Heart right ventricle (tissue), 16 donors: ENCODE measurements at regions of chr7 and their contacts with region 1.

Region 1: DNA sequence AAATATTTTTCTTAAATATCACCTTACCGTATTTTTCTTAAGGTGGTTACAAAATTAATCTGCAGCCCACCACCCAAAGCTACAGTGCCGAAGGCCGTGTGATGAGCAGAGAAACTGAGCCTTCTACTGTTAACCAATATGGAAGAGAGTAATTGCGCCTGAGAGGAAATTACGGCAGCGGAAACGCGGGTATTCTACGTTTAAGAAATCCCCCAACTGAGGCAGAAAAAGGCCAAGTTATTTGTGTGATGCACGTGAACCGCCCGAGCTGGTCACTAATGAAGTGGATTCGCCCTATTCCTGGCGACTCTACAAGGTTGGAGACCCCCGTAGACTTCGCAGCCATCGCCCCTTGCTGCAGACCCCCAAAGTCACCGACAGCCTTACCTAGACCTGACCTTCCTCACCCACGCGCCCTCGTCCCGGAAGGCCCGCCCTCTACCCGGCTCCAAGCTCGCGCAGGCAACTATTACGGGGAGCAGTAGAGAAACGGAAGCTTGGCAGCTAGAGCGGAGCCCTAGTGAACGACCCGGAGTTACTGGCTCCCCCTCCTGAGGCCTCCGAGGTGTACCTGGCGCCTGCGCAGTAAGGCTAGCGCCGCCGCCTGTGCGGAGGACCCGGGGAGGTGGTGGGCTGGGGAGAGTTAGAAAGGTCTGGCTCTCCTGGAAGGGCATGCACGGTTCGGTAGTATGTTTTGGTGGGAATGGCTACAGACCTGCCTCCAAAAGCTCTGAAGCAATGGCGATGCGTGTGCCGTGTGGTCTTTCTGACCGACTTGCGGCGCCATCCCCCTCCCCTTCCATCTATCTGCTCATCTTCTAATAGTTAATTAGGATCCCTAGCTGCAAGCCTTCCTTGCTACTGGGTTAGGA is at the start of gene MRPS33:
- DNase-seq: peak; percentile 93 to 97
- ATAC-seq: peak; percentile 100
- H3K4me3 ChIP-seq: peak within 1 kb of the TSS; percentile 56 to 82 (median 70)
- H3K27ac ChIP-seq: peak within 1 kb of the TSS; percentile 74 to 95 (median 92)
- H3K4me1 ChIP-seq: peaks cover 0 to 21% (median 14%) of the 10 kb centered on the region in 9 donors
- H3K27me3 ChIP-seq: peaks cover 0 to 38% (median 0%) of the 10 kb centered on the region in 7 donors
- CTCF ChIP-seq: peak in 8 of 9 donors; percentile 12 to 77 (median 56)
- total RNA-seq, gene MRPS33: 95.8 to 151 (median 138) TPM

Region 2: DNA sequence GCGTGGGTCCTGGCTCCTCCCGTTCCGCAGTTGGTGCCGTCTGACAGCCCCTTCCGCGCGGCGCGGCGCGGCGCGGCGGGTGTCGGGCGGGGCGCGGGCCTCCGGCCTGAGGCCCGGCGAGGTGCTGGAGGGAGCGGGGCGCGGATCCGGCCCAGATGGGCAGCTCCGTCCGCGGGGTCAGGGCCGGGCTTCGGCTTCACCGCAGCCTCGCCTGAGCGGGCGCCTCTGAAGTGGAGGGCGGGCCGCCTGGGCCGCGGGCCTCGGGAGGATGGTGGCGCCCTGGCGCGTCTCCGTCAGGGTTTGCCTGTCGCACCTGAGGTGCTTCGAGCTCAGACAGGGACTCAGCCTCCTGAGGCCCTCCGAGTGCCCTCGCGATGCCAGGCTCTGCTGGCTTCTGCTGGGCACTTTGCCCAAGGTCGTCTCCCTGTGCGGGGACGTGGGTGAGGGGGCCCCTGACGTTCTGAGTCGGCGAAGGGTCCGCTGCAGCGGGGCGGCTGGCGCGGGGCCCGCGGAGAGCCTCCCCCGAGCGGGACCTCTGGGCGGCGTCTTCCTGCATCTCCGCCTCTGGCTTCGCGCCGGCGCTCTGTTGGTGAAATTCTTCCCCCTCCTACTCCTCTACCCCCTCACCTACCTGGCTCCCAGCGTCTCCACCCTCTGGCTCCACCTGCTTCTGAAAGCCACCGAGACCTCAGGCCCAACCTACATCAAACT is 341.5 kb before region 1 on chr7:
- intact Hi-C with region 1: loop called in 4 of 10 experiments (anchors 10 kb)
- DNase-seq: peak; percentile 23 to 52
- ATAC-seq: peak; percentile 53 to 76 (median 64)
- H3K4me3 ChIP-seq: peak overlapping the region; percentile 62 to 99 (median 78)
- H3K27ac ChIP-seq: peak overlapping the region; percentile 56 to 89 (median 80)
- H3K4me1 ChIP-seq: peaks cover 0 to 35% (median 33%) of the 10 kb centered on the region in 9 donors
- H3K27me3 ChIP-seq: no peaks in the 10 kb centered on the region
- CTCF ChIP-seq: no peak

Region 3: GRCh38 chr7:140810830-140811556 is 203.8 kb before region 1 on chr7:
- intact Hi-C with region 1: loop called (anchors 1 to 10 kb)
- DNase-seq: peak in 1 of 2 donors; percentile 69
- ATAC-seq: peak; percentile 79 to 93 (median 91)
- H3K4me3 ChIP-seq: no peak overlapping the region
- H3K27ac ChIP-seq: no peak overlapping the region
- H3K4me1 ChIP-seq: peaks cover 0 to 13% (median 0%) of the 10 kb centered on the region in 9 donors
- H3K27me3 ChIP-seq: no peaks in the 10 kb centered on the region
- CTCF ChIP-seq: peak; percentile 51 to 84 (median 80)

Region 4: GRCh38 chr7:141328290-141328689 is 313.5 kb after region 1 on chr7:
- intact Hi-C with region 1: no loop called
- DNase-seq: no peak
- ATAC-seq: peak in 1 of 8 donors; percentile 55
- H3K4me3 ChIP-seq: no peak overlapping the region
- H3K27ac ChIP-seq: no peak overlapping the region
- H3K4me1 ChIP-seq: peaks cover 0 to 20% (median 7%) of the 10 kb centered on the region in 9 donors
- H3K27me3 ChIP-seq: no peaks in the 10 kb centered on the region
- CTCF ChIP-seq: no peak

Region 5: DNA sequence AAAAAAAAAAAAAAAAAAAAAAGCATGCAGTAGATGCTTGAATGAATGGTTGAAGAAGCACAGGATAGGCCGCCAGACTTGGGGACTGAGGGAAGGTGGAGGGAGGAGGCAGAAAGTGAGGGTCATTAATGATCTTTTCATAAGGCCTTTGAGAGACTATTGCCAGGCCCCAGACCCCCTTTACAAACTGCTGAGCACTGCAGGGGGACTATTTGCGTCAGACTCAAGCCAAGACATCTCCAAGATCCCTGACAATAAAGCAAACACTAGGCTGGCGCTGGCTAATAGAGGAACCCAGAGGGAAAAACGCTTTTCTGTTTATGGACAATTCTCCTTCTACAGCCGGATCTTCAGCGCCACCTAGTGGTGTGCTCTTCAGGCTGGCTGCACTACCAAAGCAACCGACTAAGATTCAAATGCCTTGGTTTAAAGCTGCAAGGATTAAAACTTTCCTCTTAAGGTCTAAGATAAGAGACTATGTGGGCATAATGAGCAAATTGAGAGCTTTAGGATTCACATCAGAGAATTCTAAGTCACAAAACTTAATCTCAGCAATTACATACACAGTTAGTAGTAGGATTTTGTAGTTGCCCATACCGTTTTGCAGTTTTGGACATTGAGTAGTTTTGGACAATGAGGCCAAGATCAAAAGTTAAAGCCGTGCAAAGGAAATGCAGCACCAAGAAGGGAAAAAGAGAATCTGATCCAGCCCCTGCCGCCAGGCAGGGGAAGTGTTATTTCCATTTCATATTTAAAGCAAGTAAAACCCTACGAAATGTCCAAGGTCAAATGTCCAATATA is 518.6 kb after region 1 on chr7:
- intact Hi-C with region 1: loop called in 3 of 10 experiments (anchors 10 kb)
- DNase-seq: peak; percentile 52 to 58
- ATAC-seq: peak; percentile 60 to 94 (median 83)
- H3K4me3 ChIP-seq: no peak overlapping the region
- H3K27ac ChIP-seq: peak overlapping the region in 4 of 10 donors; percentile 1 to 42 (median 21)
- H3K4me1 ChIP-seq: peaks cover 0 to 20% (median 0%) of the 10 kb centered on the region in 9 donors
- H3K27me3 ChIP-seq: peaks cover 0 to 11% (median 0%) of the 10 kb centered on the region in 7 donors
- CTCF ChIP-seq: peak; percentile 91 to 99 (median 95)